Pancreas (tissue), 10 donors: ENCODE measurements at regions of chr13 and their contacts with region 1.

Region 1: DNA sequence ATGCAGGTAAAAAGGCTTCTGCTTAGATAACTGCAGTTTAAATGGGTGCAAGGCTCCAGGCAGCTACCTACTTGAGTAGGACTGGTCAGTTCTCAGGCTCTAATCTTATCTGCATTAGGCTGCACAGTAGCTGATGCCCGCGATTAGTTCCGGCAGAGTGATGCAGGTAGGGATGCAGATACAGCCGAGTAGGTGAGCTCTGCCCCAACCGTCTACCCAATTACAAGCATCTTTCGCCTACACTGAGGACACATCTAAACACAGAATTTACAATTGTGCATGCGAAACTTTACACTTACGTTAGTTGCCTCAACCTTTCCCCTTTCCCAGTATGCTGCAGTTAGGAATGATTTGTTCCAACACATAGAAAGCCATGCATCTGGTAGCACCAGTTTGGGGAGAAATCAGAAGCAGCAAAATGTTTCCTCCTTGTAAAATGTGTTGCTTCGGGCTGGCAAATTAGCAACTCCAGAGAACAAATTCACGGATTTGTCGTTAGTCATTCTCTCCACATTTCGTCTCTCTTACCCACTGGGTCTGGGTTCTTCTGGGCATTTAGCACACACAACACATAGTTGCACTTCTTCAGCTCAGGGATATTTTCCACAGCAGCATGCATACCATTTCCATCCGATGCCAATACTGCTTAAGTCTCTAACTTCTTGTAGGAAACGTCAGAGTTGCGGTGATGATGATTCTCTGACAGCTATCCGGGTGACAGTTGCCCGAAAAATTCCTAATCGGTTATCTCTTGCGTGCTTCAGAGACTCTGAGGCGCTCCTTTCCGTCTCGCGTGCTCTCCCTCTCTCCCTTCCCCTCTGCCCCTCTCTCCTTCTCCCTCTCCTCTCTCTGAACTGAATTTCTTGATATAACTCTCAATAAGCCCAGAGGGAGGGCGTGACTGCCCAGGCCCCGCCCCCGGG is at the start of gene PCDH9:
- DNase-seq: no peak
- ATAC-seq: no peak
- H3K4me3 ChIP-seq: peak within 1 kb of the TSS; percentile 55 to 83 (median 74)
- H3K27ac ChIP-seq: peak within 1 kb of the TSS; percentile 58 to 77 (median 72)
- H3K4me1 ChIP-seq: no peaks in the 10 kb centered on the region
- H3K27me3 ChIP-seq: peaks cover 0 to 7% (median 0%) of the 10 kb centered on the region in 4 donors
- CTCF ChIP-seq: no peak
- total RNA-seq, gene PCDH9: 1.1 to 3.8 (median 1.7) TPM

Region 2: GRCh38 chr13:65653613-65654012 is 1576.1 kb before region 1 on chr13:
- intact Hi-C with region 1: loop called in 1 of 3 experiments (anchors 5 kb)
- DNase-seq: no peak
- ATAC-seq: no peak
- H3K4me3 ChIP-seq: no peak overlapping the region
- H3K27ac ChIP-seq: no peak overlapping the region
- H3K4me1 ChIP-seq: no peaks in the 10 kb centered on the region
- H3K27me3 ChIP-seq: peaks cover 0 to 3% (median 0%) of the 10 kb centered on the region in 4 donors
- CTCF ChIP-seq: no peak

Region 3: DNA sequence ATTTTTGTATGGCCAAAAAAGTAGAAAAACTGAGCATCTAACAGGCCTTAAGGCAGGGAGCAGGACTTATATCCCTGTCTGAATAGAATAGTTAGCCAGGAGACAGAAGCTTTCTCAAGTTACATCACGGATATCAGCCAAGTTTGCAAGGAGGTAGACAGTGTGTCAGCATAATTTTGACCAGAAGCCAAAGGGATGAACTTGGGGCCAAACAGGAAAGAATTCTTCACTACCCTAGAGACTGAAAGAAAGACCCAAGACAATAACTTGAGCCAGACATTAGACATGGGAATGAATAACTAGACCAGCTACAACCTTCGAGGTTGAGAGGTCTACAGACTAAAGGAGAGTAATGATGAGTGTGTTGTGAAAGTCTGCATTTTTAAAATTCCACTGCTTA is 48.5 kb after region 1 on chr13:
- intact Hi-C with region 1: no loop called
- DNase-seq: no peak
- ATAC-seq: peak in 2 of 4 donors; percentile 46 to 66
- H3K4me3 ChIP-seq: no peak overlapping the region
- H3K27ac ChIP-seq: no peak overlapping the region
- H3K4me1 ChIP-seq: no peaks in the 10 kb centered on the region
- H3K27me3 ChIP-seq: no peaks in the 10 kb centered on the region
- CTCF ChIP-seq: no peak